PC-9 (cell line): ENCODE measurements at regions of chr1 and their contacts with region 1.

Region 1: GRCh38 chr1:224106568-224107281 is 7.2 kb upstream of the FBXO28 start:
- DNase-seq: peak; percentile 58 to 61
- H3K4me3 ChIP-seq: no peak overlapping the region
- H3K27ac ChIP-seq: no peak overlapping the region
- H3K4me1 ChIP-seq: peaks cover 6% of the 10 kb centered on the region; the same call in 1 of the 2 replicates
- H3K27me3 ChIP-seq: no peaks in the 10 kb centered on the region
- CTCF ChIP-seq: peak; percentile 58; the same call in 1 of the 2 replicates

Region 2: DNA sequence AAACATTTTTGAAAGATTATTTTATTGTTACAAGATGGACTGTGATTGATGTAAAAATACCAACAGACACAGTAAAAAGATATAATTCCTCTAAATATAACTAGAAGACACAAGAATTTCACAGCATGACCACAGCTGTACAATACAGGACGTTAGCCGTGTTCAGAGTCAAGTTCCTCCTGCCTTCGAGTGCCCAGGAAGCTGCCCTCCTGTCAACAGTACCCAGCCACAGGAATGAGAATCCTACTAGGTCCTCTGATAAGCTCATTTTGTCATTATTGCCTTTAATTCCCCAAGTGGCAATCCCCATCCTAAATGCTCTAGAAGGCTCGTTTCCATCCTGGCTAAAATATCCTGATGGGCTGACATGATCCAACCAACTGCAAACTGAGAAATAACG is 410.8 kb before region 1 on chr1:
- CTCF ChIA-PET with region 1: no interaction called
- POLR2A ChIA-PET with region 1: interaction called, 4 read pairs
- intact Hi-C with region 1: loop called (anchors 5 kb)
- DNase-seq: no peak
- H3K4me3 ChIP-seq: no peak overlapping the region
- H3K27ac ChIP-seq: no peak overlapping the region
- H3K4me1 ChIP-seq: peaks cover 27% of the 10 kb centered on the region
- H3K27me3 ChIP-seq: no peaks in the 10 kb centered on the region
- CTCF ChIP-seq: no peak

Region 3: DNA sequence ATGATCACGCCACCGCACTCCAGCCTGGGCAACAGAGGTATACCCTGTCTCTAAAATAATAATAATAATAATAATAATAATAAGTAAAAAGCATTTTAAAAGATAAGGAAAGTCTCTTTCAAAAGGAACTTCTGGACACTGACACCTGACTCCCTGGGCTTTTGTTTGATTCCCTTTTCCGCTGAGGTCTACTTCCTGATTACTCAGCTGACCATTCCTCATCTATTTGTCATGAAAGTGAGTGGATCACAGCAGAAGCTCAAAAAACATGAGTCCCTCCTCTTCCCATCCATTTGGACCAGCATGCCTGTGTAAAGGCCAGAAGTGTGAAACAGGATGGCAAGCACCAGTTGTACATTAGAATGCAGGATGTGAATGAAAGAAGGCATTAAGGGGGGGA is 54.0 kb before region 1 on chr1:
- CTCF ChIA-PET with region 1: interaction called, 3 read pairs
- POLR2A ChIA-PET with region 1: no interaction called
- intact Hi-C with region 1: loop called (anchors 2 kb)
- DNase-seq: peak in 1 of 2 experiments; percentile 76
- H3K4me3 ChIP-seq: no peak overlapping the region
- H3K27ac ChIP-seq: peak overlapping the region; percentile 42
- H3K4me1 ChIP-seq: peaks cover 33% of the 10 kb centered on the region
- H3K27me3 ChIP-seq: no peaks in the 10 kb centered on the region
- CTCF ChIP-seq: no peak